GM10248 (cell line): ENCODE measurements at regions of chr17 and their contacts with region 1.

Region 1: DNA sequence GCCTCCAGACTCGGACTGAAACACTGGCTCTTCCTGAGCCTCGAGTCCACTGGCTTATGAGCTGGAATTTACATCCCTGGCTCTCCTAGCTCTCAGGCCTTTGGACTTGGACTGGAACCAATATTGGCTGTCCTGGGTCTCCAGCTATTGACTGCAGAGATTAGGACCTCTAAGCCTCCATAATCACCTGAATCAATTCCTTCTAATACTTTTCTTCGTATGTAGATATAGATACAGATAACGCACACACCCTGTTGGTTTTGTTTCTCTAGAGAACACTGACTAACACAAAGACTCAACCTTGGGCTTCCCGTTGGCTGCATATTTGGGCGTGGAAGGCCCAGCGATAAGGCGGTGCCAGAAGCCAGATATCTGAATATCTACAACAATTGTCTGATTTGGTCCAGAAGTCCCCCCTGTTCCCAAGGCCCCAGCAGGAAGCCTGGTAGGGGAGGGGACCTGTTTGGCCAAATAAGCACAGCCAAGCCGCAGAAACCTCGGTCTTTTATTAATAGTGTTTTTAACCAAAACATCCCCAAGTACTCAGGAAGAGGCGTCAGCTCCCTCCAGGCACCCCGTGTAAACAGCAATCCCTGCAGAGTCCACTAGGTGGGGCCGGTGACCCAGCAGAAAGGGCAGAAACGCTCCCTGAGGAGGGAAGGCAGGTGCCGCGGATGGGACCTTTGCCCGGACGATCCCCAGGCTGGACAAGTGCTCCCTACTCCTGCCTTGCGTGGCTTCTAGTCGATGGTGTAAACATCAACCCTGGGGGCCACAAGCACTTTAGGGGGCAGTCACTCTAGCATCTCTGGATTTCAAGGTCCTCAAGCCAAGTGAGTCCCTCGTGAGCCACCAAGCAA is 57.0 kb downstream of the ABR start:
- DNase-seq: peak; percentile 90
- CTCF ChIP-seq: peak; percentile 82

Region 2: DNA sequence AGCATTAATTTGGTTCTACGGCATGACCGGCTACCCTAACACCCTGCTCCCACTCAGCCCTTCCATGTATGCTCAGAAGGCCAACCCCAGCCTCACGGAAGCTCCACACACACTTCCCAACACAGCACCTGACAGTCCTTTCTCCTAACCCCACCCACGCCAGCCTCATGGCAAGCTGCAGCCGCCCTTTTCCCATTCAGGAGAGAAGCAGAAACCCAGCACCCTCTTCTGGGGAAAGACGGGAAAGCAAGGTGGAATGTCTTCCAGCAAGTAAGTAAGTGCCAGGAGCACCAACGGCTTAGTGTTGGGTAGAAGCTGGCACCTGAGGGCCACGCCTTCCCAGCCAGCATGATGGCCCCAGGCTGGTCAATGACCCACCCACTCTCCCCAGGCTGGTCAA is 24.9 kb after region 1 on chr17:
- CTCF ChIA-PET with region 1: interaction called, 15 read pairs
- POLR2A ChIA-PET with region 1: no interaction called
- DNase-seq: no peak
- CTCF ChIP-seq: no peak

Region 3: GRCh38 chr17:1197781-1198490 is 75.2 kb after region 1 on chr17:
- CTCF ChIA-PET with region 1: interaction called, 153 read pairs
- POLR2A ChIA-PET with region 1: no interaction called
- DNase-seq: peak; percentile 85
- CTCF ChIP-seq: no peak

Region 4: GRCh38 chr17:1229432-1229899 is 106.7 kb after region 1 on chr17:
- CTCF ChIA-PET with region 1: interaction called, 11 read pairs
- POLR2A ChIA-PET with region 1: no interaction called
- DNase-seq: peak; percentile 95
- CTCF ChIP-seq: no peak